ENCODE measurements at regions of chr20 and their contacts with region 1.

Region 1: GRCh38 chr20:47272893-47273590 is 83.5 kb downstream of the ZMYND8 start:
- DNase-seq: peak; percentile 70
- H3K4me3 Mint-ChIP-seq: peak overlapping the region; percentile 43
- H3K27ac Mint-ChIP-seq: peak overlapping the region; percentile 96
- H3K4me1 Mint-ChIP-seq: peaks cover 44% of the 10 kb centered on the region
- H3K27me3 Mint-ChIP-seq: no peaks in the 10 kb centered on the region

Region 2: DNA sequence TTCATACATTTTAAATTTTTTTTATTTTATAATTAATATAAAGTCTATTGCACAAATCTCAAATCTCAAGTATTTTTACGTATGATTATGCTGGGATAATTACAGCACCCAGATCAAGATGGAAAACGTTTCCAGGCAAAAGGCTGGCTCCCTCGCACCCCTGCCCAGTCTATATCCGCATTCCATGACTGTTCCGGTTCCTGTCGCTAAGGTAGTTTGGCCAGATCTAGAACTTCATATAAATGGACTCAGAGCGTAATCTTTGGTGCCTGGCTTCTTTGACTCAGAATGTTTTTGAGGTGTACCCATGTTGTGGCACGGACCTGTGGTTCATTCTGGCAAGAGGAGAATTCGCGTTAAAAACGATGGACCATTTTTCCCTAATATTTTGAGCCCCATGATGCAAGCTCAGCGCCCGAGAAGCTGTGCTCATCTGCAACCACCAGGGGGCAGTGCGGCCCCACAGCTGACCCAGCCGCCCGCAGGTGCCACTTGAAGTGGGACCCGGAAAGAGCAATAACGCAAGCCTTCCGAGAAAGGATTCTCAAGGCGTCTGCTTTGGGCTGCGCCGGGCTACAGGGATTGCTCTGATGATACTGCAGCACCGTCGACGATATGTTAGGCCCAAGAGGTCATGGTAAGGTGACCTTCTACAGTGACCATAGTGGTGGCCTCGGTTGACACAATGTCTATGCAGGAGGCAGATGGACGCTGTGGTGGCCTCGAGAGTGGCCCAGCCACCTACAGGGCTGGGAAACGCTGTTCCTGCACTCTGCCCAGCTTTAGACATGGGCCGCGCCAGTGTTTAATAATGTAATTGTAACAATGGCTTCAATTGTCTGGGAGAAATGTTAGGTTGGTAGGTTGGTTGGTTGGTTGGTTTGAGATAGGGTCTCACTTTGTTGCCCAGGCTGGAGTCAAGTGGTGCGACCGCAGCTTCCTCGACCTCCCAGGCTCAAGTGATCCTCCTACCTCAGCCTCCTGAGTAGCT is 76.7 kb before region 1 on chr20:
- CTCF ChIA-PET with region 1: interaction called, 42 read pairs
- intact Hi-C with region 1: loop called (anchors 1 kb)
- DNase-seq: peak; percentile 87
- H3K4me3 Mint-ChIP-seq: no peak overlapping the region
- H3K27ac Mint-ChIP-seq: no peak overlapping the region
- H3K4me1 Mint-ChIP-seq: peaks cover 13% of the 10 kb centered on the region
- H3K27me3 Mint-ChIP-seq: peaks cover 3% of the 10 kb centered on the region

Region 3: GRCh38 chr20:47296950-47297349 is 23.9 kb after region 1 on chr20:
- CTCF ChIA-PET with region 1: interaction called, 15 read pairs
- intact Hi-C with region 1: no loop called
- DNase-seq: peak; percentile 42
- H3K4me3 Mint-ChIP-seq: no peak overlapping the region
- H3K27ac Mint-ChIP-seq: no peak overlapping the region
- H3K4me1 Mint-ChIP-seq: peaks cover 17% of the 10 kb centered on the region
- H3K27me3 Mint-ChIP-seq: no peaks in the 10 kb centered on the region

Region 4: GRCh38 chr20:47356526-47357295 is 83.7 kb after region 1 on chr20 and contains the start of gene ZMYND8:
- CTCF ChIA-PET with region 1: interaction called, 21 read pairs
- intact Hi-C with region 1: loop called (anchors 1 kb)
- DNase-seq: peak; percentile 97
- H3K4me3 Mint-ChIP-seq: peak within 1 kb of the TSS; percentile 92
- H3K27ac Mint-ChIP-seq: peak within 1 kb of the TSS; percentile 99
- H3K4me1 Mint-ChIP-seq: peaks cover 52% of the 10 kb centered on the region
- H3K27me3 Mint-ChIP-seq: no peaks in the 10 kb centered on the region
- total RNA-seq, gene ZMYND8: 30.3 to 33.0 TPM

Region 5: GRCh38 chr20:47453142-47453782 is 180.2 kb after region 1 on chr20:
- CTCF ChIA-PET with region 1: interaction called, 6 read pairs
- intact Hi-C with region 1: loop called (anchors 1 kb)
- DNase-seq: peak; percentile 62
- H3K4me3 Mint-ChIP-seq: no peak overlapping the region
- H3K27ac Mint-ChIP-seq: peak overlapping the region; percentile 51
- H3K4me1 Mint-ChIP-seq: peaks cover 45% of the 10 kb centered on the region
- H3K27me3 Mint-ChIP-seq: no peaks in the 10 kb centered on the region

Region 6: GRCh38 chr20:47620808-47621805 is 348.1 kb after region 1 on chr20:
- CTCF ChIA-PET with region 1: interaction called, 31 read pairs
- intact Hi-C with region 1: loop called (anchors 1 kb)
- DNase-seq: peak; percentile 22
- H3K4me3 Mint-ChIP-seq: no peak overlapping the region
- H3K27ac Mint-ChIP-seq: peak overlapping the region; percentile 13
- H3K4me1 Mint-ChIP-seq: peaks cover 33% of the 10 kb centered on the region
- H3K27me3 Mint-ChIP-seq: no peaks in the 10 kb centered on the region